Mammary epithelial cell (primary cell): ENCODE measurements at regions of chr16 and their contacts with region 1.

Region 1: GRCh38 chr16:15643048-15643945 is at the start of gene MARF1:
- DNase-seq: peak; percentile 96
- H3K4me3 ChIP-seq: peak within 1 kb of the TSS; percentile 83 to 95 (median 91)
- H3K27ac ChIP-seq: peak within 1 kb of the TSS; percentile 100
- H3K4me1 ChIP-seq: peaks cover 26% of the 10 kb centered on the region
- H3K27me3 ChIP-seq: no peaks in the 10 kb centered on the region
- CTCF ChIP-seq: peak in 1 of 2 donors; percentile 42
- total RNA-seq, gene MARF1: 17.0 to 36.4 TPM

Region 2: DNA sequence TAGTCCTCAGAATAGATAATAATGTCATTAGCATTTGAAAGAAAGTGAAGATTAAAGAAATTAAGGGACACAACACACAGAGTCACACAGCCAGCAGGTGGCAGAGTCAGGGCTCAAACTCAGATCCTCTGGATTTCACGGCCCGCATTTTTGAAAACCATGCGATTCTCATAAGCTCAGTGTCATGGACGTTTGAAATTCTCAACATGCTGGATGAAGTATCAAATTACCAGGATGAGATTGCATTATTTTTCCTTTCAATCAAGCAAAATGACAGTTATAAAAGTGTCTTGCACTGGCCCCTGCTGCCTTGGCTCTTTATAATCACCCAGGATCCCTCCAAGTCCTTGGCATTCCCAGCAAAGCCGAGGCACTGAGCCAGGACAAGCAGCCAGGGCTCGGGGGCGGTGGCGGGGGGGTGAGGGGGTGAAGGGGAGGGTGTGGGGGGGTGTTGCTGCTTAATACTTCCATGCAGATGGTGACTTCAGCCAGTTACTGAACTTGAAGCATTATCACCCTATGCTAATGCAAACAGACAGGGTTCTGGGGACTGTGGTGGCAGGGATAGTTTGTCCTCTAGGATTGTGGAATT is 215.6 kb before region 1 on chr16:
- CTCF ChIA-PET with region 1: no interaction called
- dilution Hi-C with region 1: no loop called
- in situ Hi-C with region 1: no loop called
- intact Hi-C with region 1: loop called (anchors 5 kb)
- DNase-seq: no peak
- H3K4me3 ChIP-seq: no peak overlapping the region
- H3K27ac ChIP-seq: no peak overlapping the region
- H3K4me1 ChIP-seq: peaks cover 3% of the 10 kb centered on the region
- H3K27me3 ChIP-seq: no peaks in the 10 kb centered on the region
- CTCF ChIP-seq: peak; percentile 38 to 64

Region 3: DNA sequence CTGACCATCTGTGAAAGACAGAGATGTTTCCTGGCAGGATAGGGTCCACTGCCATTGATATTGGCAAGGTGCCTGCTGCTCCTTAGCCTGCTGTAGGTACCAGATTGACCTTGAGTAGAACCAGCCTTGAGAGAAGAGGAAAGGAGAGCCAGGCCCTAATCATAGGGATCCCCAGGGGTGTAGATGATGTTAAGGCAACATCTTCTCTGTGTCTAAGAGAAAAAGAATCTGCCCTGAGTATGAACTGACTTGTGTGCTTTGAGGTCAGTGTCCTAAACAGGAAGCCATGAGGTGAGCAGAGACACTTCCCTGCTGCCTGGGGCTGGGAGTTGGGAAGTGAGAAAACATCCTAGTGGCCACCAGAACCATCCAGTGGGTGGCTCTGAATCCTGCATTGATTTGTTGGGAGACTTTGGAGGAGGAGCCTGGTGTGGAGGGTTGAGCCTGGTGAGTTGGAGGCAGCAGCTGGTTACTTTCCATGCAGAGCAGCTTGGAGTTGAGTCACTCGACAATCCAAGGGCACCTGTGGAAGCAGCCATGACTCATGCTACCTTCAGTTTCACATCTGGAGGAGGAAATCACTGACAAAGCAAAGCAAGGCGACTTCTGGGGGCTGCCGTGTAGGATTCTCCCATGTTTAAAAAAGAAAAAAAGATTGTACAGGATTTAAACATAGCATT is 161.1 kb before region 1 on chr16:
- CTCF ChIA-PET with region 1: no interaction called
- dilution Hi-C with region 1: no loop called
- in situ Hi-C with region 1: no loop called
- intact Hi-C with region 1: loop called (anchors 2 kb)
- DNase-seq: peak; percentile 98
- H3K4me3 ChIP-seq: no peak overlapping the region
- H3K27ac ChIP-seq: peak overlapping the region; percentile 32
- H3K4me1 ChIP-seq: peaks cover 13% of the 10 kb centered on the region
- H3K27me3 ChIP-seq: no peaks in the 10 kb centered on the region
- CTCF ChIP-seq: peak in 1 of 2 donors; percentile 31

Region 4: DNA sequence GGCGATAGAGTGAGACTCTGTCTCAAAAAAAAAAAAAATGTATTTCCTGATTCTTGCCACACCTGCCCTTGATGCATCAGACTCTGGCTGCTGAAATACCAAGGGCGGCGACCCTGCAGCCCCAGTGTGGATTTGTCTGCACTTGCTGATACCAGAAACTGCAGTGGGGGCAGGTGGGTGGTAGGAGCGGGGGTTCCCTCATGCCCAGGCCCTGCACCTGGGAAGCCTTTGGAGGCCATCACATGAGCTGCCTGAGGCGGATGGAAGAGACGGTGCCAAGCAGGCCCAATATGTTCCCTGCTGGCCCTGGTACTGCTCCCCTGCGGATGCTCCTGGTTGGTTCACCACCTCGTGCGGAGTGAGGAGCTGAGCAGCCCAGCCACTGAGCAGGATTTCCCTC is 51.0 kb before region 1 on chr16:
- CTCF ChIA-PET with region 1: no interaction called
- dilution Hi-C with region 1: no loop called
- in situ Hi-C with region 1: no loop called
- intact Hi-C with region 1: loop called (anchors 1 kb)
- DNase-seq: no peak
- H3K4me3 ChIP-seq: no peak overlapping the region
- H3K27ac ChIP-seq: no peak overlapping the region
- H3K4me1 ChIP-seq: peaks cover 16% of the 10 kb centered on the region
- H3K27me3 ChIP-seq: no peaks in the 10 kb centered on the region
- CTCF ChIP-seq: no peak

Region 5: DNA sequence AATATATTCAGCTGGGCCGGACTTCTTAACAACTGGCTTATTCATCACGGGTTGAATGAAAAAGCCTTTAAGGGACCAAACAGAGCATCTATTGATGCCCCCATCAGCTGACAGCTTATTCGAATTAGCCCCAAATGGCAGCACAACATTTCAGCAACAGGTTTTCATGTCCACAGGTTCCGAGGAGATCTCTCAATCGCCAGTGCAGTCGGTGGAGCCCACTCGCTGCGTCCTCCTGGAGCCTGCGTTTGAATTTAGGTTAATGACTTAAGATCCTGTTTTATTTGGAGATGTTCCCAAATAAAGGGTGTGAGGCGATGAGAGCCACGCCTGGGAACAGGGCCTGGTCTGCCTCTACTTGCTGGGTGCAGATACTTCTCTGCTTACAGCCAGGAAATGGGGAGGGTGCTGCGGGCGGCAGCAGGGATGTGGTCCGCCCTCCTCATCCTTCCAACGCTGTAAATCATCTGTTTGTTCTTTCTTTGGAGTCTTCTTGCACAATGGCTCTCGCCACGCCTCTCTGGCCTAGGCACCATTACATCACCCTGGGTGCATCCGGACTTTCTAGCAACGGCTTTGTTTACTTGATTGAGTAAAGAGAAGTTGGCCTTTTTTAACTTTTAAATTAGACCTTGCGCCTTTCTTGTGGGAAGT is 29.3 kb after region 1 on chr16:
- CTCF ChIA-PET with region 1: no interaction called
- dilution Hi-C with region 1: loop called (anchors 5 kb)
- in situ Hi-C with region 1: no loop called
- intact Hi-C with region 1: loop called (anchors 1 kb)
- DNase-seq: peak; percentile 99
- H3K4me3 ChIP-seq: no peak overlapping the region
- H3K27ac ChIP-seq: peak overlapping the region; percentile 98
- H3K4me1 ChIP-seq: peaks cover 44% of the 10 kb centered on the region
- H3K27me3 ChIP-seq: no peaks in the 10 kb centered on the region
- CTCF ChIP-seq: no peak

Region 6: GRCh38 chr16:15682105-15682570 is 38.8 kb after region 1 on chr16:
- CTCF ChIA-PET with region 1: interaction called, 3 read pairs
- dilution Hi-C with region 1: loop called (anchors 5 kb)
- in situ Hi-C with region 1: no loop called
- intact Hi-C with region 1: loop called (anchors 1 kb)
- DNase-seq: peak; percentile 72
- H3K4me3 ChIP-seq: no peak overlapping the region
- H3K27ac ChIP-seq: peak overlapping the region; percentile 84
- H3K4me1 ChIP-seq: peaks cover 10% of the 10 kb centered on the region
- H3K27me3 ChIP-seq: no peaks in the 10 kb centered on the region
- CTCF ChIP-seq: peak; percentile 63 to 67

Region 7: DNA sequence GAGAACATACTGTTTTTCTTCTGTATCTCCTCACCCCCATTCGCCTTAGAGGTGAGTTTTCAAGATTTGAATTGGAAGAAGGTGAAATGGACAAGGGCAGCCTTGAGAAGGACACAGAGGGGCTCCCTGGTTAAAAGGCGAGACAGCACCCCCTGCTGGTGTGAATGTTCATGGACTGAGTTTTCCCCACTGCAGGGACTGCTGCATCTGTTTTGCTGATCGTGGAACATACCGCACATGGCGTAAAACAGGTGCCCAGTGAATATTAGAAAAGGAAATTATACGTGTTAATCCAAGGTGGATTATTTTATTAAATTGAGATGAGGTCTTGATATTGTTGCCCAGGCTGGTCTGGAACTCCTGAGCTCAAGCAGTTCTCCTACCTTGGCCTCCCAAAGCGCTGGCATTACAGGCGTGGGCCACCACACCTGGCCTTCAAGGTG is 61.3 kb after region 1 on chr16:
- CTCF ChIA-PET with region 1: no interaction called
- dilution Hi-C with region 1: no loop called
- in situ Hi-C with region 1: no loop called
- intact Hi-C with region 1: loop called (anchors 1 kb)
- DNase-seq: peak; percentile 29
- H3K4me3 ChIP-seq: no peak overlapping the region
- H3K27ac ChIP-seq: no peak overlapping the region
- H3K4me1 ChIP-seq: no peaks in the 10 kb centered on the region
- H3K27me3 ChIP-seq: no peaks in the 10 kb centered on the region
- CTCF ChIP-seq: peak; percentile 74 to 82